Natural killer cell (primary cell): ENCODE measurements at regions of chr18 and their contacts with region 1.

Region 1: GRCh38 chr18:50266248-50266704 is at the start of gene CFAP53:
- DNase-seq: peak; percentile 83 to 89
- ATAC-seq: peak; percentile 88 to 94 (median 89)
- H3K4me3 ChIP-seq: peak within 1 kb of the TSS; percentile 53
- H3K4me3 Mint-ChIP-seq: peak within 1 kb of the TSS; percentile 91
- H3K27ac ChIP-seq: peak within 1 kb of the TSS; percentile 75
- H3K27ac Mint-ChIP-seq: peak within 1 kb of the TSS; percentile 89 to 93
- H3K4me1 ChIP-seq: peaks cover 28% of the 10 kb centered on the region
- H3K4me1 Mint-ChIP-seq: peaks cover 21 to 27% of the 10 kb centered on the region in 2 donors
- H3K27me3 ChIP-seq: no peaks in the 10 kb centered on the region
- H3K27me3 Mint-ChIP-seq: peaks cover 3 to 7% of the 10 kb centered on the region in 2 donors
- CTCF ChIP-seq: no peak
- total RNA-seq, gene CFAP53: 0.20 to 0.24 (median 0.20) TPM

Region 2: GRCh38 chr18:50038448-50038847 is 227.8 kb before region 1 on chr18:
- intact Hi-C with region 1: no loop called
- DNase-seq: peak in 1 of 2 donors; percentile 5
- ATAC-seq: no peak
- H3K4me3 ChIP-seq: no peak overlapping the region
- H3K4me3 Mint-ChIP-seq: no peak overlapping the region
- H3K27ac ChIP-seq: no peak overlapping the region
- H3K27ac Mint-ChIP-seq: no peak overlapping the region
- H3K4me1 ChIP-seq: no peaks in the 10 kb centered on the region
- H3K4me1 Mint-ChIP-seq: no peaks in the 10 kb centered on the region
- H3K27me3 ChIP-seq: no peaks in the 10 kb centered on the region
- H3K27me3 Mint-ChIP-seq: peaks cover 19 to 35% of the 10 kb centered on the region in 2 donors
- CTCF ChIP-seq: no peak

Region 3: GRCh38 chr18:50281295-50281971 is 15.2 kb after region 1 on chr18 and contains the start of gene MBD1:
- intact Hi-C with region 1: loop called (anchors 1 kb)
- DNase-seq: peak; percentile 94 to 100
- ATAC-seq: peak; percentile 92 to 96 (median 93)
- H3K4me3 ChIP-seq: peak within 1 kb of the TSS; percentile 89
- H3K4me3 Mint-ChIP-seq: peak within 1 kb of the TSS; percentile 94
- H3K27ac ChIP-seq: peak within 1 kb of the TSS; percentile 92
- H3K27ac Mint-ChIP-seq: peak within 1 kb of the TSS; percentile 92 to 99
- H3K4me1 ChIP-seq: peaks cover 34% of the 10 kb centered on the region
- H3K4me1 Mint-ChIP-seq: peaks cover 28 to 74% of the 10 kb centered on the region in 2 donors
- H3K27me3 ChIP-seq: no peaks in the 10 kb centered on the region
- H3K27me3 Mint-ChIP-seq: no peaks in the 10 kb centered on the region
- CTCF ChIP-seq: peak; percentile 13
- total RNA-seq, gene MBD1: 106 to 113 (median 111) TPM

Region 4: GRCh38 chr18:50307738-50308470 is 41.6 kb after region 1 on chr18:
- intact Hi-C with region 1: loop called (anchors 1 kb)
- DNase-seq: peak; percentile 70 to 96
- ATAC-seq: peak; percentile 95 to 100 (median 98)
- H3K4me3 ChIP-seq: peak overlapping the region; percentile 42
- H3K4me3 Mint-ChIP-seq: peak overlapping the region; percentile 94
- H3K27ac ChIP-seq: no peak overlapping the region
- H3K27ac Mint-ChIP-seq: peak overlapping the region; percentile 46 to 73
- H3K4me1 ChIP-seq: peaks cover 16% of the 10 kb centered on the region
- H3K4me1 Mint-ChIP-seq: peaks cover 11 to 17% of the 10 kb centered on the region in 2 donors
- H3K27me3 ChIP-seq: no peaks in the 10 kb centered on the region
- H3K27me3 Mint-ChIP-seq: peaks cover 17 to 40% of the 10 kb centered on the region in 2 donors
- CTCF ChIP-seq: no peak

Region 5: DNA sequence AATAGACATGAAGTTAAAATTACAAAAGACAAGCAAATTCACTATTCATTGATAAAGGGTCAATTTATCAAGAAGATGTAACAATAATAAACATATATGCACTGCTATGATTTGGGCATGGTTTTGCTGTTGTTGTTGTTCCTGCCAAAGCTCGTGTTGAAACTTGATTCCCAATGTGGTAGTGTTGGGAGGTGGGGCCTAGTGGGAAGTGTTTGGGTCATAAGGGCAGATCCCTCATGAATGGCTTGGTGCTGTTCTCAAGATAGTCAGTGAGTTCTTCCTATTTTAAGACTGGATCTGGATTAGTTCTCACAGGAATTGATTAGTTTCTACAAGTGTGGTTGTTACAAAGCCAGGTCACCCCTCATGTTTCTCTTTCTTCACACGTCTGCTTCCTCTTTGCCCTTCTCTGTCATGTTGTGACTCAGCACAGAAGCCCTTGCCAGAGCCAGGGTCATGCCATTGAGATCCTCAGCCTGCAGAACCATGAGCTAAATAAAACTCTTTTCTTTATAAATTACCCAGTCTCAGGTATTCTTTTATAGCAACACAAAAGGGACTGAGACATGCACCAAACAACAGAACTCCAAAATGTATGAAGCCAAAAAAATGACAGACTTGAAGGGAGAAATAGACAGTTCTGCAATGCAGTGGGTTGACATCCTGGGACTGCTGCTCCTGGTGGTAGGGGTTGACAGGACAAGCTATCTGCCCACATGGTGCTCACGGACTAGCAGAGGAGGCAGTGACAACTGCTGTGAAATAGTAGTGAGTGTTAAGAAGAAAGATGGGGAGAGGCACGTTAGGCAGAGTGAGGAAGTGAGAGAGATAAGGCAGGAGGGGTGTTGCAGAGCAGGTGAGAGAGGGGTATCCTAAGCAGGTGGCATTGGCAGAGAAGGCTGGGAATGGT is 90.0 kb after region 1 on chr18:
- intact Hi-C with region 1: loop called (anchors 5 kb)
- DNase-seq: peak in 1 of 2 donors; percentile 31
- ATAC-seq: peak in 2 of 3 donors; percentile 25 to 54
- H3K4me3 ChIP-seq: no peak overlapping the region
- H3K4me3 Mint-ChIP-seq: no peak overlapping the region
- H3K27ac ChIP-seq: no peak overlapping the region
- H3K27ac Mint-ChIP-seq: peak overlapping the region in 1 of 2 donors; percentile 14
- H3K4me1 ChIP-seq: peaks cover 6% of the 10 kb centered on the region
- H3K4me1 Mint-ChIP-seq: peaks cover 5 to 7% of the 10 kb centered on the region in 2 donors
- H3K27me3 ChIP-seq: peaks cover 2% of the 10 kb centered on the region
- H3K27me3 Mint-ChIP-seq: peaks cover 12 to 36% of the 10 kb centered on the region in 2 donors
- CTCF ChIP-seq: no peak